CD8-positive, alpha-beta memory T cell (primary cell): ENCODE measurements at regions of chr11 and their contacts with region 1.

Region 1: DNA sequence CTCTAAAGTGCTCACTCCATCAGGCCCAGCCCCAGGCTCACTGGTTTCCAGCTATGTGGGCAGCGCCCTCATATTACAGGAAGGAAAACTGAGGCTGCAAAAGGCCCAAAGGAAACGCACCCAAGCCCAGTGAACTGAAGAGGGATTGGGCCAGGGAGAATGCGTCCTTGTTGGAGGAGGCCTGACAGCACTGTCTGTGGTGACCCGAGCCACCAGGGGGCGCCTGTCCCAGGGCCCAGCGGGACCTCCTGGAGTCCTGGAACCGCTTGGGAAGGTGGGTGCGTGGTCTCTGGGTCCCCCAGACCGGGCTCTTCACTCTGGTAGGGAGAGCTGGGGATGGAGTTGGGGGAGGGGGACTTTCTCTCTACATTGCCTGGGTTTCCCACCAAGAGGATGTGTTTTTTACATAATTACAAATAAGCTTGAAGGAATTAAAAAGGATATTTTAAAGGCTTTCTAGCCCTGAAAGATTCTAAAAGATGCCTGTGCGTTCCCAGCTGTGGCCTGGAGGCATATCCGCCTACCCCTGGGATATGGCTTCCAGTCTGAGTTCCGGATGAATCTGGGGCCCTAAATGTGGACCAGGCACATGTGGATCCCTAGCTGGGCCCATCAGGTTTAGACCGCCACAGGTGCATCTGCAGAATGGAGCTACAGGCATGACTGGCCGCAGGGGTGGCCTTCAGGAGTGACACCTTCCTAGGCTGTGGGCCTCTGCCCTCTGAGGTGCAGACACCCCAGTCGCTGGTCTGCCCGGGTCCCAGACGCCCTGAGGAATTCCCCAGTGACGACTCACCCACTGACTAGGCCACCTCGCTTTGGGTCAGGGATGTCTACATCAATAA is 4.2 kb downstream of the SPI1 start:
- DNase-seq: peak; percentile 75 to 90 (median 80)
- H3K4me3 ChIP-seq: no peak overlapping the region
- H3K4me3 Mint-ChIP-seq: no peak overlapping the region
- H3K27ac ChIP-seq: no peak overlapping the region
- H3K27ac Mint-ChIP-seq: peak overlapping the region in 4 of 8 donors; percentile 15 to 63 (median 42)
- H3K4me1 ChIP-seq: peaks cover 3% of the 10 kb centered on the region
- H3K4me1 Mint-ChIP-seq: peaks cover 0 to 2% (median 0%) of the 10 kb centered on the region in 3 donors
- H3K27me3 ChIP-seq: no peaks in the 10 kb centered on the region
- H3K27me3 Mint-ChIP-seq: peaks cover 0 to 5% of the 10 kb centered on the region in 2 donors

Region 2: DNA sequence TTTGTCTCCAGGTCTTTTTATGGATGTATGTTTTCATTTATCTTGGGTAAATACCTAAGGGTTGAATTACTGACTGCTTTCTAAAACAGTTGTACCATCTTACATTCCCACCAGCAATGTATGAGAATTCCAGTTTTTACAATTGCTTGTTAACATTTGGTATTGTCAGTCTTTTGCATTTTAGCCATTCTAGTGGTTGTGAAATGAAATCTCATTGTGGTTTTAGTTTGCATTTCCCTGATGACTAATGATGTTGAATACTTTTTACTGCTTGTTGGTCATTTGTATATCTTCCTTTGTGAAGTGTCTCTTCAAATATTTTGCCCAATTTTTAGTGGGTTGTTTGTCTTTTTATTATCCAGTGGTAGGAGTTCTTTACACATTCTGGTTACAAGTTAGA is 290.2 kb before region 1 on chr11:
- CTCF ChIA-PET with region 1: no interaction called
- POLR2A ChIA-PET with region 1: no interaction called
- DNase-seq: no peak
- H3K4me3 ChIP-seq: no peak overlapping the region
- H3K4me3 Mint-ChIP-seq: no peak overlapping the region
- H3K27ac ChIP-seq: no peak overlapping the region
- H3K27ac Mint-ChIP-seq: no peak overlapping the region
- H3K4me1 ChIP-seq: no peaks in the 10 kb centered on the region
- H3K4me1 Mint-ChIP-seq: no peaks in the 10 kb centered on the region
- H3K27me3 ChIP-seq: no peaks in the 10 kb centered on the region
- H3K27me3 Mint-ChIP-seq: no peaks in the 10 kb centered on the region

Region 3: DNA sequence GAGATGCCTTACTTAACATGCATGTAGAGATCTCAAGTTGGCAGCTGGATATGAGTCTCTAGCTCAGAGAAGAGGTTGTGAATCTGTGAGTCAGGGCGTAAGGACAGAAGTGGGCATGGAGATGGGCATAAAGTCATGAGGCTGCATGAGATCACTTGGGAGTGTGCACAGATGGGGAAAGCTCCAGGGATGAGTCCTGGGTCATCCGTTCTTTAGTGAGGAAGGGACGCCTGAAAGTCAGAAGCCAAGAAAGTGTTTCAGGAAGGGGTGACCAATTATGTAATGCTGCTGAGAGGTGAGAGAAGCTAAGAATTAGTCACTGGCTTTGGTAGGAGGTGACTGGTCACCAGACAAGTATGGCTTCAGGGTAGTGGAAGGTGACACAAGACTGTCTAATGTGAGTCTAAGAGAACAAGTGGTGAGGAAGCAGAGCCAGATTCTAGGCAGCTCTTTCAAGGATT is 132.2 kb before region 1 on chr11:
- CTCF ChIA-PET with region 1: no interaction called
- POLR2A ChIA-PET with region 1: no interaction called
- DNase-seq: no peak
- H3K4me3 ChIP-seq: no peak overlapping the region
- H3K4me3 Mint-ChIP-seq: peak overlapping the region in 1 of 7 donors; percentile 28
- H3K27ac ChIP-seq: no peak overlapping the region
- H3K27ac Mint-ChIP-seq: peak overlapping the region in 4 of 8 donors; percentile 6 to 43 (median 25)
- H3K4me1 ChIP-seq: no peaks in the 10 kb centered on the region
- H3K4me1 Mint-ChIP-seq: peaks cover 2 to 10% (median 5%) of the 10 kb centered on the region in 3 donors
- H3K27me3 ChIP-seq: no peaks in the 10 kb centered on the region
- H3K27me3 Mint-ChIP-seq: peaks cover 0 to 3% of the 10 kb centered on the region in 2 donors

Region 4: GRCh38 chr11:47361419-47361818 is 12.7 kb before region 1 on chr11:
- CTCF ChIA-PET with region 1: interaction called, 13 read pairs
- POLR2A ChIA-PET with region 1: no interaction called
- DNase-seq: no peak
- H3K4me3 ChIP-seq: no peak overlapping the region
- H3K4me3 Mint-ChIP-seq: no peak overlapping the region
- H3K27ac ChIP-seq: no peak overlapping the region
- H3K27ac Mint-ChIP-seq: peak overlapping the region in 1 of 8 donors; percentile 25
- H3K4me1 ChIP-seq: no peaks in the 10 kb centered on the region
- H3K4me1 Mint-ChIP-seq: peaks cover 0 to 2% (median 0%) of the 10 kb centered on the region in 3 donors
- H3K27me3 ChIP-seq: no peaks in the 10 kb centered on the region
- H3K27me3 Mint-ChIP-seq: peaks cover 5 to 12% of the 10 kb centered on the region in 2 donors

Region 5: DNA sequence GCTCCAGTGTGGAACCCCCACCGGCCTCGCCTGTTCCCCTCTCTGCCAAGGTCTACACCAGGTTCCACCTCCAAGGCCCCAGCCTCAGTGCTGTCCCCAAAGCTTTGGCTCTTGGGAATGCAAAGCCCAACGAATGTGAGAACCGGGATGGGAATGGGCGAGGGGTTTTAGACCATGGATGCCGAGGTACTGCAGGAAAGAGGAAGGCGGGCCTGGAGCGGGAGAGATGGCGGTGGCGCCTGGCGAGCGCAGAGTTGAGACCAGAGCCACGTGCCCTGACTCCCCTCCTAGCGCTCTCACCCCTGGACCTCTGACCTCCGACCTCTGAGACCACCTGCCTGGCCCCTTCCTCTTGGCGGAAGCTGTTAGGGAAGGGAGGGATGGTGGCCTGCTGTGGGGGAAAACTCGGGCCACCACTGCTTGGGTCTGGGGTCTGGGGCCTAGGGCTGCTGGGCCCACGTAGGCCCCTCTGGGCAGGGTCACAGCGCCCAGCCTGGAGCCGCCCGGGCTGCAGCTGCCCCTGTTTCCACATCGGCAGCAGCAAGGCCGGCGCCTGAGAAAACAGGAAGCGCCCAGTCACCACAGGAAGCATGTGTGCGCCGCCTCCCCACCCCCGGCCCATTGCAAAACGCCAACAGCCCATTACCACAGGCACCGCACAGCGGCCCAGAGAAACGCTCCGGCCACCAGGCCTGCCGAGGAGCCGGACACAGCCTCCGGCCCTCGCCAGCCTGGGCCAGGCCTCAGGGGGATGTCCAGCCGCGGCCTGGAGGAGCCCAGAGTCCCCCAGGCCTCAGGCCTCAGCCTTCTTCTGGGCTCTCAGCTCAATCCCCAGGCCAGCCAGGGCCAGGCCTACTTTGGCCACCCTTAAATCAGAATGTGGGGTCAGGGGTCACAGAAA is 20.5 kb after region 1 on chr11:
- CTCF ChIA-PET with region 1: interaction called, 106 read pairs
- POLR2A ChIA-PET with region 1: interaction called, 3 read pairs
- DNase-seq: peak; percentile 31 to 73 (median 40)
- H3K4me3 ChIP-seq: peak overlapping the region; percentile 68
- H3K4me3 Mint-ChIP-seq: peak overlapping the region; percentile 48 to 74 (median 68)
- H3K27ac ChIP-seq: peak overlapping the region; percentile 79
- H3K27ac Mint-ChIP-seq: peak overlapping the region; percentile 77 to 93 (median 85)
- H3K4me1 ChIP-seq: peaks cover 42% of the 10 kb centered on the region
- H3K4me1 Mint-ChIP-seq: peaks cover 40 to 75% (median 55%) of the 10 kb centered on the region in 3 donors
- H3K27me3 ChIP-seq: no peaks in the 10 kb centered on the region
- H3K27me3 Mint-ChIP-seq: no peaks in the 10 kb centered on the region

Region 6: DNA sequence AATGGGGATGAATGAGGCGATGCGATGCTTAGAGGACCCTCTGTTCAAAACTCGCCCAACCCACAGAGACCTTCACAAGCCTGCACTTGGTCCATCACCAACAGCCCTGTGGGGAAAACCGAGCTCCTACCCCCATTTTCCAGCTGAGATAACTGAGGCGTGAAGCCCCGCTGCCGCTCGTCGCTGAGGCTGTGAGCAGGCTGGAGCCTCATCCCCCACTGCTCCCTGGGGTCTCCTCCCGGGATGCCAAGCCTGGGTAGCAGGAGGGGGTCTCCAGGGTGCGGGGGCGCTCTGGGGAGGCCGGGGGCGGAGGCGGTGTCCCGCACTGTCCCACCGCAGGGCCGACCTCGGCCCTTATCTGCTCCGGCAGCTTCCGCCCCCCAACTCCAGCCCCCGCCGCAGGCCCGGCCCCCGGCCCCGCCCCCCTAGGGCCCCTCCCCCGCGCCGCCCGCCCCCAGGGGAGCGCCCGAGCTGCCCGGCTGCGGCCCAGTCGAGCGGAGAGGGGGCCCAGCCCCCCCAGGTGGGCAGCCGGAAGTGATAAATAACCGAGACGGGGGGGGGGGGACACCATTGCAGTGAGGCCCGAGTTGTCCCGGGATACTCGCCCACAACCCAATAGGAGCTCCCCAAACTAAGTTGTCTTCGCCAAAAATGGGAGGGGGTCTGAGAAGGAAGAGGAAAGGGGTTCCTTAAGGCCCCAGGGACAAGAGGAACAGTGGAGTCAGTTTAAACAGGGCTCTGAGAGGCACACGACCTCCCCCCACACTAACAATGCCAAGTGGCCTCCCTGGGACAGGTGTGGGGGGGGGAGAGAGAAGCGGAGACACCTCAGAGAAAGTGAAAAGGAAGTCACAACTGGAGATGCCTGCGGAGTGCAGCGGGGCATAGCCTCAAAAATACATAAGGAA is 26.0 kb after region 1 on chr11:
- CTCF ChIA-PET with region 1: interaction called, 106 read pairs
- POLR2A ChIA-PET with region 1: no interaction called
- DNase-seq: peak; percentile 27 to 65 (median 39)
- H3K4me3 ChIP-seq: peak overlapping the region; percentile 65
- H3K4me3 Mint-ChIP-seq: peak overlapping the region; percentile 59 to 92 (median 81)
- H3K27ac ChIP-seq: peak overlapping the region; percentile 44
- H3K27ac Mint-ChIP-seq: peak overlapping the region; percentile 61 to 97 (median 82)
- H3K4me1 ChIP-seq: peaks cover 28% of the 10 kb centered on the region
- H3K4me1 Mint-ChIP-seq: peaks cover 19 to 44% (median 25%) of the 10 kb centered on the region in 3 donors
- H3K27me3 ChIP-seq: no peaks in the 10 kb centered on the region
- H3K27me3 Mint-ChIP-seq: no peaks in the 10 kb centered on the region

Region 7: DNA sequence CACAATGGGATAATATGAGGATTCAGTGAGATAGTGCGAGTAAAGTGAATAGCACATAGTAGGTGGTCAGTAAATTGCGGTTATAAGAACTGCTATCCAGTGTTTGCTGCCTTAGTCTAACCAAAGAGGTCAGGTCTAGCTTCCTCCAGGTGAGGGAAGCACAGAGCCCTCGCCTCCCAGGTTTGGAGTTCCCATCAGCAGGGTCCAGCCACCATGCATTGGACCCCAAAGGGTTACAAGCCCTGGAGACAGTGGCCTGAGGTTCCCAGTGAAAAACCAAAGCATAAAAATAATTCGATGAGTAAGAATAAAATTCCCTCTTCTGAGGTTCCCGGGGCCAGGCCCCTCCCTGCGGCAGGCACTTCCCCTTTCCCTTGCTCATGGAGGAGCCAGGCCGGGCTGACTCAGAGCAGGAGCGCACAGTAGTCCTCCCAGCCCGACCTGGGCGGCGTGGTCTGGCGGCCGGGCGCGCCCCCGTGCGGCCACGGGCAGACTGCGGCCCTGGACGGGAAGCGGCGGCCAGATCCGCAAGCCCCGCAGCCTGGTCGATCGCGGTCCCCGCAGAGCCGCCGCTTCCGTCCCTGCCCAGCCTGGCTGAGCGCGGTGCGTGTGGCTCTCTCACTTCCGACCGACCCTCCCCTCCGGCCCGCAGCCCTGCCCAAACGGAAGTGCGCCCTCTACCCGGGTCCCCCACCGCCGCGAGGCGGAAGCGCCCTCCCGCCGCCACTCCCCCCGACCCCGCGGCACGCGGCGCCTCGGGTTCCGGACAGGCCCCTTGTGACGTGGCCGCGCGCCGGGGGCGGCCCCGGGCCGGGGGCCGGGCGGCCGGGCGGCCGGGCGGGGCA is 33.9 kb after region 1 on chr11 and contains the start of gene SLC39A13:
- CTCF ChIA-PET with region 1: interaction called, 129 read pairs
- POLR2A ChIA-PET with region 1: interaction called, 6 read pairs
- DNase-seq: peak; percentile 85 to 92 (median 89)
- H3K4me3 ChIP-seq: peak within 1 kb of the TSS; percentile 72
- H3K4me3 Mint-ChIP-seq: peak within 1 kb of the TSS; percentile 87 to 96 (median 91)
- H3K27ac ChIP-seq: peak within 1 kb of the TSS; percentile 69
- H3K27ac Mint-ChIP-seq: peak within 1 kb of the TSS; percentile 88 to 98 (median 94)
- H3K4me1 ChIP-seq: peaks cover 19% of the 10 kb centered on the region
- H3K4me1 Mint-ChIP-seq: peaks cover 15 to 32% (median 19%) of the 10 kb centered on the region in 3 donors
- H3K27me3 ChIP-seq: no peaks in the 10 kb centered on the region
- H3K27me3 Mint-ChIP-seq: no peaks in the 10 kb centered on the region
- total RNA-seq, gene SLC39A13: 20.2 to 23.4 TPM

Region 8: GRCh38 chr11:47426061-47426956 is 52.2 kb after region 1 on chr11 and contains the start of gene PSMC3:
- CTCF ChIA-PET with region 1: interaction called, 11 read pairs
- POLR2A ChIA-PET with region 1: no interaction called
- DNase-seq: peak; percentile 95 to 97 (median 97)
- H3K4me3 ChIP-seq: peak within 1 kb of the TSS; percentile 99
- H3K4me3 Mint-ChIP-seq: peak within 1 kb of the TSS; percentile 93 to 99 (median 99)
- H3K27ac ChIP-seq: peak within 1 kb of the TSS; percentile 93
- H3K27ac Mint-ChIP-seq: peak within 1 kb of the TSS; percentile 84 to 99 (median 98)
- H3K4me1 ChIP-seq: peaks cover 13% of the 10 kb centered on the region
- H3K4me1 Mint-ChIP-seq: peaks cover 23 to 31% (median 31%) of the 10 kb centered on the region in 3 donors
- H3K27me3 ChIP-seq: no peaks in the 10 kb centered on the region
- H3K27me3 Mint-ChIP-seq: peaks cover 0 to 5% of the 10 kb centered on the region in 2 donors
- total RNA-seq, gene PSMC3: 200 to 219 TPM